HEK293T (cell line): ENCODE measurements at regions of chr5 and their contacts with region 1.

Region 1: GRCh38 chr5:102893942-102894341 is 138.8 kb downstream of the PAM start:
- DNase-seq: no peak

Region 2: GRCh38 chr5:102911973-102912372 is 18.0 kb after region 1 on chr5:
- CTCF ChIA-PET with region 1: interaction called, 11 read pairs
- POLR2A ChIA-PET with region 1: no interaction called
- DNase-seq: no peak

Region 3: GRCh38 chr5:102937916-102938315 is 44.0 kb after region 1 on chr5:
- CTCF ChIA-PET with region 1: no interaction called
- POLR2A ChIA-PET with region 1: no interaction called
- DNase-seq: no peak